ENCODE measurements at regions of chr2 and their contacts with region 1.

Region 1: DNA sequence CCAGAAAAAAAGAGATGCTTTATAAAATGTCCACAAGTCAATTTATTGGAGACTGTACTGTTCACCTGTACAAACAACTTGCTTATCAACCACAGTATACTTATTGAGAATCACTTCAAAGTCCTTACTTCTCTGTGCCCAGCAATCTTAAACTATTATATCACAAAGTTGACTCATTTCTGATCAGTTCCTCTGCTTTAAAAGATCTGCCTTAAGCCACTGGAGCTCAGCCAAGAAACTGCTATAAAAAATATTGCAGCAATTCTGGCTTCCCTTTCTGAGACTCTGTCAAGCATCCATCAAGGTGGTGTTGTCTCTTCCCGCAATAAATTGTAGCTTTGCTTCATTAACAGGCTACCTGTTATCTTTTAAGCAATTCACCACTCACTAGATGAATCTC is 375.2 kb upstream of the SPHKAP start:
- DNase-seq: no peak
- H3K4me3 ChIP-seq: no peak overlapping the region
- H3K27ac ChIP-seq: no peak overlapping the region
- H3K4me1 ChIP-seq: no peaks in the 10 kb centered on the region
- H3K27me3 ChIP-seq: no peaks in the 10 kb centered on the region
- CTCF ChIP-seq: no peak
- POLR2A ChIP-seq: no peak

Region 2: GRCh38 chr2:227744276-227744675 is 812.4 kb before region 1 on chr2:
- intact Hi-C with region 1: loop called (anchors 5 kb)
- DNase-seq: no peak
- H3K4me3 ChIP-seq: no peak overlapping the region
- H3K27ac ChIP-seq: no peak overlapping the region
- H3K4me1 ChIP-seq: no peaks in the 10 kb centered on the region
- H3K27me3 ChIP-seq: no peaks in the 10 kb centered on the region
- CTCF ChIP-seq: no peak
- POLR2A ChIP-seq: no peak

Region 3: DNA sequence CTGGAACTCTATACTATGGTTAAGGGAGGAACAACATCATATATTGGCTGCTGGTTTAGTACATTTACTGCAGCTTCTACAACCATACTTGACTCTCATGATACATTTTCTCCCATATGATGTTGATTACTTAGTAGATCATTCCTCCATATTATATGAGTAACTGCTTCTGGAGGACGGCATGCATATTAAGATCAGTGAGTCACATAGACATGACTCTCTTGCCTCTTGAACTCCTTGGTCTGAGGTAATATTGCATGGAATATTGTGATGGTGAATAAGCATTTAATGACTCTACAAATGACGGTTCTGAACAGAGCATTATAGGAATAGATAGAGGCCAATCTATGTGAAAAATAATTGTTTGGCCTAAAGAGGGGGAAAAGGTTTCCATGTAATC is 43.5 kb after region 1 on chr2:
- intact Hi-C with region 1: no loop called
- DNase-seq: no peak
- H3K4me3 ChIP-seq: no peak overlapping the region
- H3K27ac ChIP-seq: no peak overlapping the region
- H3K4me1 ChIP-seq: no peaks in the 10 kb centered on the region
- H3K27me3 ChIP-seq: no peaks in the 10 kb centered on the region
- CTCF ChIP-seq: no peak
- POLR2A ChIP-seq: no peak

Region 4: DNA sequence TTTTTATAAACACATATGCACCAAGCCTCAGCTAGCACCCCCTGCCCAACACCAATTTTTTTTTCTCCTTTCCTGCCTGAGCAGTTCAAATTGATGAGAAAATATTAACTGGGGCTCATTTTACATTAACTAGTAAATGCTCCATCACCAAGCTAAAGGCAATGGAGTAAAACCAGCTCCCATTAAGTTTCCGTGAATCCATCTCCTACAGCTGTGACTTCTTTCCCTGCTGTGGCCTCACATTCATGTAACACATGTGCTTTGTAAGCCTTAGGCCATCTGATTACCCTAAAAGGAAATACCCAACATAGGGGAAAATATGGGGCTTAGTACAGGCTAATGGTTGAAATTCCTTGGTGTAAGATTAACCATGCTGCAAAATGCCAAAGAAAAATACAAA is 1096.8 kb after region 1 on chr2:
- intact Hi-C with region 1: no loop called
- DNase-seq: no peak
- H3K4me3 ChIP-seq: no peak overlapping the region
- H3K27ac ChIP-seq: no peak overlapping the region
- H3K4me1 ChIP-seq: no peaks in the 10 kb centered on the region
- H3K27me3 ChIP-seq: no peaks in the 10 kb centered on the region
- CTCF ChIP-seq: no peak
- POLR2A ChIP-seq: no peak

Measured in breast epithelium (tissue), 4 donors.